Lower leg skin (tissue), 4 donors: ENCODE measurements at regions of chr1 and their contacts with region 1.

Region 1: DNA sequence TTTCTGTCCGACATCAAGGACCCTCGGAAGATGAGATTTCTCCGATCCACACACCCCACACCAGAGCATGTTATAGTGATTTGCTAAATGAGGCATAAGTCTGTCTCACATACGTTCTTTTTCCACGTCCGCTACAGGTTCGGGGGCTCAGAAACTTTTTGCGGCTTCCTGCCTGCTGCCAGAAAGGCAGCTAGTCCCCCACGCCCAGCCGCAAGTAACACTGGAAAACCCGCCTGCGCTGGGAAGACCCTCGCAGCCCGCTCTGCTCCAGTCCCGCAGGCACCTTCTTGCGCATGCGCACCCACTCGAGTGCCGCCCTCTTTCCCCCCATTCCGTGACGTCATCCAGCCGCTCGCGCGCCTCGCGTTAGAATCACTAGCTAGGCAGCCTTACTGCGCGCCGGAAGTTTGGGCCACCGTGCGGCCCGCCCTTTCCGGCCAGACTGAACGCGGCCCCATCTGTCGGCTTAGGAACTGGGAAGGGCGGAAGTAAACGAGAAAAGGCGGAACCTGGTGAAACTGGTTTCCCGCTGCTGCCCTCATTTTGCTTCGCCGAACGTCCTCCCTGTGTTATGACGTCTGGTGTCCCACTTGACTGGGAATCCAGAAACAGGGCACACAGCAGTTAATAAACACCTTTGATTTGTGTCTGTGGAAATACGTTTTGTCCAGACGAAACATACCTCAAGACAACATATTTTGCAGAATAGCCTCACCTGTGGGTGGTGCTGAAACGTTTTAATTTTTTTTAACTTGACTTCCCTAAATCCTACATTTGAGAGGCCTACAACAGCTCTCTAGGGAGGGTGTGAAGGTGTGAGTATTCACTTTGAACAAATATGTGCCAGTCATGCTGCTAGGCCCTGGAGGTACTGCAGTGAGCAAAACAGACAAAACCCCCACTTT is at the start of gene C1orf74:
- DNase-seq: peak; percentile 98 to 100
- H3K4me3 ChIP-seq: peak within 1 kb of the TSS; percentile 8
- CTCF ChIP-seq: no peak
- POLR2A ChIP-seq: no peak
- total RNA-seq, gene C1orf74: 2.3 to 3.7 (median 2.8) TPM

Region 2: DNA sequence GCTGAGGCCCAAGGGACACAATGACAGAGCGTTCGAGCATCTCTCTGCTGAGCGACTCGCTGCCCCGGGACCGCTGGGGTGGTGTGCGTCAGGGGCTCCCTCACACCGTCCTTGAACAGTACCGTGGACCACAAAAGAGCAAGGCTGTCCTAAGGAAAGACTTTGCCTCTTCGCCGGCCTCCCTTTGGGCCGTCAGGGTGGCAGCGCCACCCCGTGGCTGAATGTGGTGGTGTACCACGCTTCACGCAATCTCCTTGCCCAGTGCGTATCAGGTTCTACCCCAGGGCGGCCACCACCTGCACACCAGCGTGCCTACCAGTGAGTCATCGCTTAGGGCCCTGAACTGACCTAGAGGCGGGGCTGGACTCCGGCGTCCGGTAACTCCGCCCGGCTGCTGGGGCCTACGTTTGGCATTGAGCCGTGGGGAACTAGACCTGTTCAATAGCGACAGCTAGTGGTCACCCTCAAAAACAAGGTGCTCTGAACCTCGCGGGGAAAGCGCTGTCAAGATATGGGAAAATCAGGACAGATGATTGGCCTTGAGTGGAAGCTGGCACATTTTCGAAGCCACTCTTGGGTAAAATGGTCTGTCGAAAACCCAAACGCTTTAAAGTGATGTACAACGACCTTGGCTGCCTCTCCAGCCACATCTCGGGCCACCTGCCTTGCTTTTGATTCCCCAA is 36.8 kb before region 1 on chr1:
- intact Hi-C with region 1: no loop called
- DNase-seq: peak; percentile 88 to 97
- H3K4me3 ChIP-seq: no peak overlapping the region
- CTCF ChIP-seq: peak in 1 of 3 donors; percentile 71
- POLR2A ChIP-seq: no peak

Region 3: DNA sequence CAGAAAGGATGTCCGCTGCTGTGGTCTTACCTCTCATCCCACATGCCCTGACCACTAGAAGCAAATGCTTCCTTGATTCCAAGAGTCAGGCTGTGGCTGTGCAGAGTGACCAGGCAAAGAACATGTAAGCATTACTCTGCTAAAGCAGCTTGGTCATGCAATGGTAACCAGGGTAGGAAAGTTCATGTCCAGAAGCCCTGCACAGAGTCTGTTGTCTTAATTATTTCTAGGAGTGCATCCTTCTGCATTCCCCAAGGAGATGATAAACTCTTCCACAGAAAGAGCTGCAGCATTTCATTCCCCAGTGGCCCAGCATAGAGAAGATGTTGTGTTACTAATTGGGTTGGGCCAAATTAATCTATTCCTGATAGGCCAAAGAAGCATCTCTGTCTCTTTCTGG is 33.2 kb after region 1 on chr1:
- intact Hi-C with region 1: loop called (anchors 1 kb)
- DNase-seq: no peak
- H3K4me3 ChIP-seq: no peak overlapping the region
- CTCF ChIP-seq: no peak
- POLR2A ChIP-seq: no peak

Region 4: DNA sequence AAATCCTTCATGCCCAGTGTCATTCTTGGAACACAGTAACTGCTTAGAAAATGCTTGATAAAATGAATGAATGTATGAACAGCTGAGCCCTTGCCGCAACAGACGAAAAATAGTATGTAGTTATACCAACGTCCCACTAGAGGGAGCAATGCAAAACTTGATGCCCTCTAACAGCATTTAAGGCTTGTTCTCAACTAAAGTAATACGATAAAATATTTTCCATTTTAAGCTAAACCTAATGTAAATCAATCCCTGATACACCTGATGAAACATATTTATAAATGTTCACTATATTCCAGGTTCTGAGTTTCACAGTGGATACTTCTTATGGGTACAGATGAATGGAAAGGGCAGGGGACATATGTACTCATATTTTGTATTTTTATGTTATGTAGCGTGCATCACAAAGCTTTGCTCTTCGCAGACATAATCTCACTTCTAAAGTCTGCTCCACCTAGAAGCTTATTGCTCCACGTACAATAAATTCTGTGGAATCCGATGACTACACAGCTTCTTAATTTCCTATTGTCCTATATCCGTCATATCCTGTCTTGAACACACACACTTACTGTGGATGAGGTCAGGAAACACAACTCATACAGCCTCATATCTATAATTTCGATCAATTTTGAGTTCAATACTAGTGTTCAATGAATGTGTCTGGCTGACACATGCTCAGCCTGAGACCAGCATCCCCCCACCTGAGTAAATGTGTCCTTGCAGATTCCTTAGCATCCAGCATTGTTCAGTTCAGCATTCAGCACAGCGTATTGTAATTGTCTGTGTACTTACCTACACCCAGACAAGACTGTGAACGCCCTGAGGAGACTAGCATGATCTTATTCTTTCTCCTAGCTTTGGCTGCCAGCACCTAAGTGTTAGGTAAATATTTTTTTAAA is 38.9 kb after region 1 on chr1:
- intact Hi-C with region 1: loop called (anchors 1 kb)
- DNase-seq: no peak
- H3K4me3 ChIP-seq: no peak overlapping the region
- CTCF ChIP-seq: no peak
- POLR2A ChIP-seq: no peak

Region 5: GRCh38 chr1:210866532-210866931 is 1082.0 kb after region 1 on chr1:
- intact Hi-C with region 1: no loop called
- DNase-seq: no peak
- H3K4me3 ChIP-seq: no peak overlapping the region
- CTCF ChIP-seq: no peak
- POLR2A ChIP-seq: no peak